Activated CD8-positive, alpha-beta T cell treated with anti-CD3 and anti-CD28 coated beads for 36 hours (primary cell): ENCODE measurements at regions of chr11 and their contacts with region 1.

Region 1: GRCh38 chr11:86440305-86440716 is 65.6 kb downstream of the CCDC81 start:
- DNase-seq: no peak
- ATAC-seq: no peak
- H3K4me3 Mint-ChIP-seq: no peak overlapping the region
- H3K27ac Mint-ChIP-seq: peak overlapping the region; percentile 25
- H3K4me1 Mint-ChIP-seq: peaks cover 50% of the 10 kb centered on the region
- H3K27me3 Mint-ChIP-seq: no peaks in the 10 kb centered on the region
- CTCF ChIP-seq: no peak

Region 2: GRCh38 chr11:85941380-85941973 is 498.8 kb before region 1 on chr11:
- CTCF ChIA-PET with region 1: no interaction called
- POLR2A ChIA-PET with region 1: no interaction called
- intact Hi-C with region 1: loop called (anchors 10 kb)
- DNase-seq: peak; percentile 57
- ATAC-seq: peak; percentile 72
- H3K4me3 Mint-ChIP-seq: no peak overlapping the region
- H3K27ac Mint-ChIP-seq: no peak overlapping the region
- H3K4me1 Mint-ChIP-seq: peaks cover 10% of the 10 kb centered on the region
- H3K27me3 Mint-ChIP-seq: no peaks in the 10 kb centered on the region
- CTCF ChIP-seq: peak; percentile 65

Region 3: GRCh38 chr11:86302100-86302793 is 138.1 kb before region 1 on chr11 and contains the start of gene HIKESHI:
- CTCF ChIA-PET with region 1: no interaction called
- POLR2A ChIA-PET with region 1: no interaction called
- intact Hi-C with region 1: loop called (anchors 10 kb)
- DNase-seq: peak; percentile 97
- ATAC-seq: peak; percentile 98
- H3K4me3 Mint-ChIP-seq: peak within 1 kb of the TSS; percentile 89
- H3K27ac Mint-ChIP-seq: peak within 1 kb of the TSS; percentile 97
- H3K4me1 Mint-ChIP-seq: peaks cover 31% of the 10 kb centered on the region
- H3K27me3 Mint-ChIP-seq: no peaks in the 10 kb centered on the region
- CTCF ChIP-seq: no peak
- total RNA-seq, gene HIKESHI: 59.6 to 60.5 TPM

Region 4: DNA sequence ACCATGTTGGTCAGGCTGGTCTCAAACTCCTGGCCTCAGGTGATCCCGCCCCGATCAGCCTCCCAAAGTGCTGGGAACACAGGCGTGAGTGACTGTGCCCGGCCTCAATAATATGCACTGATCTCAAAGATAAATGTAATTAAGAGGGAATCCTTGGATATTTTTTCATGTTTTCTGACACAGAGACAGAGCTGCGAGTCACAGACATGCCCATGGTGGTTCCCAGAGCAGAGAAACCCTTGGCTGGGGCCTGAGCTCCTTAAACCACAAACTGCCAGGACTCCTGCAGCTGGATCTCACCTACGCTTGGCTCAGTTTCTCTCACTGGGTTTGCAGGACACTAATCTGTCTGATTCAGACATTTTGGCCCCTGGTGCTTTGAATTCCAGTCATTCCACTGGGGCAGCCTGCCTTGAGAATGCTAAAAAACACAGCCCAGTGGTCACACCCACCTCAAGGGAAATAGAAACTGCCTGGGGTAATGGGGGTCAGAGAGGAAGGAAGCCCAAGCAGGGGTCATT is 56.9 kb after region 1 on chr11:
- CTCF ChIA-PET with region 1: no interaction called
- POLR2A ChIA-PET with region 1: no interaction called
- intact Hi-C with region 1: no loop called
- DNase-seq: no peak
- ATAC-seq: no peak
- H3K4me3 Mint-ChIP-seq: no peak overlapping the region
- H3K27ac Mint-ChIP-seq: no peak overlapping the region
- H3K4me1 Mint-ChIP-seq: peaks cover 2% of the 10 kb centered on the region
- H3K27me3 Mint-ChIP-seq: peaks cover 3% of the 10 kb centered on the region
- CTCF ChIP-seq: no peak